ENCODE measurements at regions of chr12 and their contacts with region 1.

Region 1: DNA sequence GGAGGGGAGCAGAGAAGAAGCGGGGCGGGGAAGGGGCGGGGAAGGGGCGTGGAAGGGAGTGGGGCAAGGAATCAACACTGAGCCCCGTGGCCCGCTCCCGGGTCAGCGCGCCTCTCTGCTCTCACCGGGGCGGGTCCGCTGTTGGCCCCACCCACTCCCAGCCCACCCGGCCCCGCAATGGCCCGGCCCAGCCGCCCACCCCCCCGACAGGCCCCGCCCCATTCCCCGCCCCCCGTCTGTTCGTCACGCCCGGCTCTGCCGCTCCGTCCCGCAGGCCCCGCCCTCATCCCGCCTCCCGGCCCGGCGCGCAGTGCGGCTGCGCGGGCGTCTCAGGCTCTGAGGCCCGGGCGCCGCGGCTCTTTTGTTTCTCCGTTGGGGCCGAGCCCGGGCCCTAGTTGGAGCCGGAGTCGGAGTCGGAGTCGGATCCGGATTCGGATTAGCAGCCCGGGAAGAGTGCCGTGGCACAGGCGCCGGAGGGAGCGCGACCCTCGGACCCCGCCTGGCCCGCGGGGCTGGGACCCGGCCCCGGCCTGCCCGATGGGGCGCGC is at the start of gene ULK1:
- DNase-seq: peak; percentile 91
- ATAC-seq: peak; percentile 80
- H3K4me3 ChIP-seq: peak within 1 kb of the TSS; percentile 49 to 74 (median 59)
- H3K4me3 Mint-ChIP-seq: peak within 1 kb of the TSS; percentile 91
- H3K27ac ChIP-seq: peak within 1 kb of the TSS; percentile 6 to 69
- H3K27ac Mint-ChIP-seq: peak within 1 kb of the TSS; percentile 88
- H3K4me1 ChIP-seq: peaks cover 18 to 23% of the 10 kb centered on the region in 2 donors
- H3K4me1 Mint-ChIP-seq: peaks cover 21% of the 10 kb centered on the region
- H3K27me3 ChIP-seq: no peaks in the 10 kb centered on the region
- H3K27me3 Mint-ChIP-seq: peaks cover 4% of the 10 kb centered on the region
- CTCF ChIP-seq: no peak
- total RNA-seq, gene ULK1: 59.5 and 83.3 TPM in 2 replicates

Region 2: GRCh38 chr12:131710464-131711457 is 183.6 kb before region 1 on chr12 and contains the start of gene SFSWAP:
- CTCF ChIA-PET with region 1: no interaction called
- POLR2A ChIA-PET with region 1: no interaction called
- intact Hi-C with region 1: loop called (anchors 5 kb)
- DNase-seq: peak; percentile 92
- ATAC-seq: peak; percentile 95
- H3K4me3 ChIP-seq: peak within 1 kb of the TSS; percentile 83 to 100 (median 96)
- H3K4me3 Mint-ChIP-seq: peak within 1 kb of the TSS; percentile 98
- H3K27ac ChIP-seq: peak within 1 kb of the TSS; percentile 93 to 99
- H3K27ac Mint-ChIP-seq: peak within 1 kb of the TSS; percentile 99
- H3K4me1 ChIP-seq: peaks cover 16 to 22% of the 10 kb centered on the region in 2 donors
- H3K4me1 Mint-ChIP-seq: peaks cover 30% of the 10 kb centered on the region
- H3K27me3 ChIP-seq: no peaks in the 10 kb centered on the region
- H3K27me3 Mint-ChIP-seq: no peaks in the 10 kb centered on the region
- CTCF ChIP-seq: no peak
- total RNA-seq, gene SFSWAP: 122 and 135 TPM in 2 replicates

Region 3: DNA sequence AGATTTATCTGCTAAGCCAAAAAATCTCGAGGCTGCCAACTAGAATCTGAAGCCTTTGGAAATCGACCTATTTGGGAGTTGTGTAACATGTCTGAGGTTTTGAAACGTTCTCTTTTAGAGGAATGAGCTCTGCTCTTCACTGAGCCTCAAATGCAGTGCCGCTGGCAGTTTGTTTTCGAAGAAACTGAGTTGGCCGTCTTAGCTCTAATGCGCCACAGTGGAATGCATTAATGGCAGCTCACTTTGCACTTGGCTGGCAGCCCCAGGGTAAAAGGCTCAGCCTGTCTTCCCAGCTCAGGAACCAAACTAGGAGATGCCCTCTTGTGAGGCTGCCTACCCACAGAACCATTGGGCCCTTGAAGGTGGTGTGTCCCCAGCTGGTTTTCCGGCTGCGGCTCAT is 129.6 kb before region 1 on chr12:
- CTCF ChIA-PET with region 1: no interaction called
- POLR2A ChIA-PET with region 1: no interaction called
- intact Hi-C with region 1: loop called (anchors 10 kb)
- DNase-seq: no peak
- ATAC-seq: no peak
- H3K4me3 ChIP-seq: no peak overlapping the region
- H3K4me3 Mint-ChIP-seq: no peak overlapping the region
- H3K27ac ChIP-seq: no peak overlapping the region
- H3K27ac Mint-ChIP-seq: no peak overlapping the region
- H3K4me1 ChIP-seq: peaks cover 13 to 18% of the 10 kb centered on the region in 2 donors
- H3K4me1 Mint-ChIP-seq: peaks cover 31% of the 10 kb centered on the region
- H3K27me3 ChIP-seq: no peaks in the 10 kb centered on the region
- H3K27me3 Mint-ChIP-seq: no peaks in the 10 kb centered on the region
- CTCF ChIP-seq: no peak

Region 4: GRCh38 chr12:131836714-131837397 is 57.5 kb before region 1 on chr12:
- CTCF ChIA-PET with region 1: no interaction called
- POLR2A ChIA-PET with region 1: no interaction called
- intact Hi-C with region 1: no loop called
- DNase-seq: no peak
- ATAC-seq: no peak
- H3K4me3 ChIP-seq: no peak overlapping the region
- H3K4me3 Mint-ChIP-seq: no peak overlapping the region
- H3K27ac ChIP-seq: no peak overlapping the region
- H3K27ac Mint-ChIP-seq: no peak overlapping the region
- H3K4me1 ChIP-seq: no peaks in the 10 kb centered on the region
- H3K4me1 Mint-ChIP-seq: peaks cover 5% of the 10 kb centered on the region
- H3K27me3 ChIP-seq: no peaks in the 10 kb centered on the region
- H3K27me3 Mint-ChIP-seq: peaks cover 6% of the 10 kb centered on the region
- CTCF ChIP-seq: no peak

Region 5: DNA sequence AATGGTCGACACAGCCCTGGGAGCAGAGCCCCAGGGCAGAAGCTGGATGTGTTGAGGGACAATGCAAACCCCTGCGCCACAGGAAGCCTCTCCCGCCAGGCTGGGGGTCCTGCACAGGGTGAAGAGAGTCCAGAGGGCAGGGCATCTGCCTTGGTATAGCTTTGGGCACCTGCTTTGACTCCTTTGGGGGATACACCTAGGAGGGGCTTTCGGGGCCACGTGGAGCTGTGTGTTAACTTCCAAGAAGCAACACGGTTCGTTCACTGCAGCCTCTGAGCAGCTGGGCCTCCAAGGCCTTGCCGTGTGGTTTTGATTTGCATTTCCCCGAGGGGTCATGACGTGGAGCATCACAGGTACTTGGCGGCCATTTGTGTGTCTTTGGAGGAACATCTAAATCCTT is 28.9 kb after region 1 on chr12:
- CTCF ChIA-PET with region 1: interaction called, 4 read pairs
- POLR2A ChIA-PET with region 1: interaction called, 7 read pairs
- intact Hi-C with region 1: loop called (anchors 1 kb)
- DNase-seq: peak; percentile 88
- ATAC-seq: peak; percentile 81
- H3K4me3 ChIP-seq: peak overlapping the region in 3 of 5 experiments; percentile 15 to 33 (median 29)
- H3K4me3 Mint-ChIP-seq: peak overlapping the region; percentile 76
- H3K27ac ChIP-seq: peak overlapping the region; percentile 61 to 68
- H3K27ac Mint-ChIP-seq: peak overlapping the region; percentile 78
- H3K4me1 ChIP-seq: peaks cover 31 to 44% of the 10 kb centered on the region in 2 donors
- H3K4me1 Mint-ChIP-seq: peaks cover 39% of the 10 kb centered on the region
- H3K27me3 ChIP-seq: no peaks in the 10 kb centered on the region
- H3K27me3 Mint-ChIP-seq: no peaks in the 10 kb centered on the region
- CTCF ChIP-seq: no peak